Heart right ventricle (tissue), 16 donors: ENCODE measurements at regions of chr11 and their contacts with region 1.

Region 1: GRCh38 chr11:27642954-27643353 is 57.3 kb downstream of the BDNF start:
- DNase-seq: no peak
- ATAC-seq: peak in 1 of 8 donors; percentile 22
- H3K4me3 ChIP-seq: no peak overlapping the region
- H3K27ac ChIP-seq: no peak overlapping the region
- H3K4me1 ChIP-seq: peaks cover 0 to 18% (median 0%) of the 10 kb centered on the region in 9 donors
- H3K27me3 ChIP-seq: no peaks in the 10 kb centered on the region
- CTCF ChIP-seq: peak in 5 of 9 donors; percentile 11 to 22 (median 17)

Region 2: GRCh38 chr11:27524155-27524554 is 118.8 kb before region 1 on chr11:
- intact Hi-C with region 1: loop called in 1 of 10 experiments (anchors 10 kb)
- DNase-seq: no peak
- ATAC-seq: no peak
- H3K4me3 ChIP-seq: no peak overlapping the region
- H3K27ac ChIP-seq: no peak overlapping the region
- H3K4me1 ChIP-seq: peaks cover 0 to 13% (median 3%) of the 10 kb centered on the region in 9 donors
- H3K27me3 ChIP-seq: no peaks in the 10 kb centered on the region
- CTCF ChIP-seq: peak in 3 of 9 donors; percentile 13 to 18 (median 17)

Region 3: DNA sequence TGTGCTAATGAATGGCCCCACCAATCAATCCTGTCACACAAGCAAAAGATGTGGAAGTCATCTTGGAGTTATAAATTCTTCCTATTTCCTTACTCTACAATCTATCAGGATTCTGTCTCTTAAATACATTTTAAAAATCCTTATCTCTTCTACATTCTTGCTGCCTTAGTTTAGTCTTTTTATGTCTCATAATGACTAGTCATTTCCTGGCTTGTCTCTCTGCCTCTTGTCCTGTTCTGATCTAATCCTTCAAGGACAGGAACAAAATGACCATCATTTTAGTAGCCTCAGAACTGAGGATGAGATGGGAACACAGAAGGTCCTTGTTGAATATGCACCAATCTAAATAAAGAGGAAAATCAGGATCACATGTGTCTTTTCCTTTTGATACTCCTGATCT is 79.8 kb before region 1 on chr11:
- intact Hi-C with region 1: no loop called
- DNase-seq: no peak
- ATAC-seq: no peak
- H3K4me3 ChIP-seq: no peak overlapping the region
- H3K27ac ChIP-seq: no peak overlapping the region
- H3K4me1 ChIP-seq: no peaks in the 10 kb centered on the region
- H3K27me3 ChIP-seq: no peaks in the 10 kb centered on the region
- CTCF ChIP-seq: no peak